Left cardiac atrium (tissue), 4 donors: ENCODE measurements at regions of chr11 and their contacts with region 1.

Region 1: GRCh38 chr11:70755410-70756161 is 357.3 kb downstream of the CTTN start:
- DNase-seq: peak; percentile 82
- ATAC-seq: peak; percentile 97 to 98

Region 2: DNA sequence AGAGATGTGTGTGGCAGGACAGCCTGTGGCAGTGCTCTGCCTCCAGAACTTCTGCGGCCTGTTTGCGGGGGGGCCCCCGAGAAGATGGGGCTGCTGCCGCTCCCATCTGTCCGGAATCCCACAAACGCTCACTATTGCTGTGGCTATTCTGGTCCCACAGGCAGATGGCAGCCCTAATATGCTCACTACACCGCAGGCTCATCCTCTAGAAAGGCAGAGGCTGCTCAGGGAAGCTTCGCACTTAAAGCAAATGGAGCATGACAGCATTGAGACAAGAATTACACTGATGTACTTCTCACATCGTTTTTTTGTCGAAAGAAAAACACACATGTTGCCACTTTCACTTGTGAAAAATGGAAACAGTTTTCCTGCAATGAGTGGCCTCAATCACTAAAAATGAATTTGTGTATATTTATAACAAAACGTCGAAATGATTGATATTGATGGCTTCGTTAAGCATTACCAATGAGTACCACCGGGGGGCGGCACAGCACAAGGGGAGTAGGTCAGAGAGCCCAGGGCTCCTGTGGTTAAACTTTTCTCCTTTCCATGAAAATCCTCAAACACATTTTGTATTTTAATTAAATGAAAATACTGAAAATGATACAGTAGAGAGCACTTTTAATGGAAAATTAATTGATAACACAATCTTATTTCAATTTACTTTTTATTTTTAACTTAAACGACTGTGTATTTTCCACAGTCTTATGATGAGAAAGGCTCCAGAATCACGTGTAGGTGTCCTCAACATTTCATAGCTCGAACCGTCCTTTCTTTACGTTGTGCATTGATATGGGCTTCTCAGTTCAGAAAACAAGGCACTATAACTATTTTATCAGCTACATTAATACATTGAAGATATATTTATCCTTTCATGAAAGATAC is 288.1 kb before region 1 on chr11:
- intact Hi-C with region 1: loop called (anchors 1 to 2 kb)
- DNase-seq: peak; percentile 63
- ATAC-seq: peak; percentile 40 to 51

Region 3: DNA sequence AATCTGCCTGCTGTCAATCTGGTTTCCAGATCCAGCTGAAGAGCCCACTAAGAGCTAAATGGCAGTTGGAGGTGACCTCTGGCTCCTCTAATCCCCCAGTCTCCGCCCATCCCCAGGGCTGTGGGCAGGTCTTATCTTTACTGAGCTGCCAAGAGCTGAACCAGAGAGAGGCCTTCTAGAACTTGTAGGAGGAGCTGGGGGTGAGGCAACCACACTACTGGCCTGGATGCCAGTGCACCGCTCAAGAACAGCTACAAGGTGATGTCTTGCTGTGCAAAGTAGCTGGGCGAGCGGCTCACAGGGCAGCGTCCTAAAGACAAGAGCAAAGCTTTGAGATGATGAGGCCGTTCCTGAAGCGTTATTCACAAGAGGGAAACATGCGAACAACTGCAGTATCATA is 17.4 kb after region 1 on chr11:
- intact Hi-C with region 1: no loop called
- DNase-seq: no peak
- ATAC-seq: no peak

Region 4: DNA sequence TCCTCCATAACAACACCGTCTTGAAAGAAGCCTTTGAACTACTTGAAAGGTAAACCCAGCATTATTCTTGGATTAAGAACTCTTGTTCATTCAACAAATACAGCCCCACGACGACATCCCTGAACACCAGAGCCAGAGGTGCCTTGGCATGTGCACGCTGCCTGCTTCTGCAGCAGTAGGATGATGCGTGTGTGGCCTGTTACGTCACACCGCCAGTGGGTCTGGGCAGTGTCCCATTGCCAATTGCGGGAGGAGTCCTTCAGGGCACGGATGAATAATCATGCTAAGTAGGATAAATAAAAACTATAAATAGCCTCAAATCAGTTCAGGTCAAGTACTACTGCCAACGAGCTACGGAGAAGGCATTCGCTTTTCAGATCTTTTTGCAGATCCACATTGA is 116.3 kb after region 1 on chr11:
- intact Hi-C with region 1: no loop called
- DNase-seq: peak; percentile 39
- ATAC-seq: peak in 1 of 2 donors; percentile 72

Region 5: GRCh38 chr11:71325418-71326327 is 570.1 kb after region 1 on chr11:
- intact Hi-C with region 1: no loop called
- DNase-seq: no peak
- ATAC-seq: no peak